Activated T-helper 2 cell treated with anti-CD3 and anti-CD28 coated beads, Interferon-gamma antibody, Interleukin-2, Interleukin-4, amounts not matched to agents 10 μg/mL and 5 μg/mL and 100 μg/mL, durations not matched to agents 14 hours and 24 hours and 36 hours (primary cell): ENCODE measurements at regions of chr20 and their contacts with region 1.

Region 1: DNA sequence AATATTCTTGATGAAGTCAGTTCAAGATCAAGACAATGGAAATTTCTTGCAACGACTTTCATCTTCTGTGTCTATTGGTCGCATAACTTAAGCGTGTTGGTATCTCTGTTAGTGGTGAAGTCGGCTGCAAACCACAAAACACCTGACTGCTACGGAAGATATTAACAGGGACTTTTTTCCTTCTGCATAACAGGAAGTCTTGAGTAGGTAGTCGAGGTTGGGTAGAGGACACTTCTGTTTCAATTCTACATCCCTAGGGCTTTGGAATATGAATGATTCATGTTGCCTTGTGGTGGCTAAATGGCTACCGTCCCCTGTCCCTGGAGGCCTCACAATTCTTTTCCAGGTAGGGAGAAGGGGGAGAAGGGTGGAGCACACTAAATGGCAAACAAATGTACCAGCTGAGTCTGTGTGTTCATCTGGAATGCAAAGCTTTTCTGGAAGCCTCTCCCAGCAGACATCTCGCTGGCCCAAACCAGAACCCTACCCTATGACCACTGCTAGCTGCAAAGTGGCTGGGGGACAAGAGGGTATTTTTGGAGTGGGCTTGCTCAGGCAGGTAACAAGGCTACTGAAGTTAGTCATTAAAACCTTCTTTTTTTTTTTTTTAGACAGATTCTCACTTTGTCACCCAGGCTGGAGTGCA is 34.6 kb upstream of the NKX2-2 start:
- DNase-seq: peak; percentile 48
- H3K4me3 Mint-ChIP-seq: peak overlapping the region; percentile 5
- H3K27ac Mint-ChIP-seq: peak overlapping the region; percentile 77
- H3K4me1 Mint-ChIP-seq: peaks cover 27% of the 10 kb centered on the region
- H3K27me3 Mint-ChIP-seq: peaks cover 2% of the 10 kb centered on the region

Region 2: DNA sequence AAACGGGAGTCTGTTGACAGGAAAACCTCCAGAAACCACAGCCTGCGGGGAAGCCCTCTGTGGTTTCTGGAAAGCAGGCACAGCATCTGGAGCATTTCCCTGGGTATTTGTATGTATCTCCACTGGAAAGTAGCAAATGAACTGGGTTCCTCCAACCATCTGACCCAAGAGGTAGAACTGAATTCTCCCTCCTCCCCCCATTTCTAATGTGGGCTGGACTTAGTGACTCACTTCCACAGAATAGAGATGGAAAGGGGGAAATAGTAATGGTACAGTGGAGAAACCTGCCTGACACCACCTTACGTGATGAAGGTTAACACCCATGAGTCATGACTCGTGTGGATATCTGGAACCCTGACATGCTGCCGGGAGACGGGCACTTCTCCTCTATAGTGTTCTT is 297.2 kb before region 1 on chr20:
- intact Hi-C with region 1: loop called (anchors 1 kb)
- DNase-seq: no peak
- H3K4me3 Mint-ChIP-seq: peak overlapping the region; percentile 42
- H3K27ac Mint-ChIP-seq: peak overlapping the region; percentile 95
- H3K4me1 Mint-ChIP-seq: peaks cover 21% of the 10 kb centered on the region
- H3K27me3 Mint-ChIP-seq: no peaks in the 10 kb centered on the region

Region 3: DNA sequence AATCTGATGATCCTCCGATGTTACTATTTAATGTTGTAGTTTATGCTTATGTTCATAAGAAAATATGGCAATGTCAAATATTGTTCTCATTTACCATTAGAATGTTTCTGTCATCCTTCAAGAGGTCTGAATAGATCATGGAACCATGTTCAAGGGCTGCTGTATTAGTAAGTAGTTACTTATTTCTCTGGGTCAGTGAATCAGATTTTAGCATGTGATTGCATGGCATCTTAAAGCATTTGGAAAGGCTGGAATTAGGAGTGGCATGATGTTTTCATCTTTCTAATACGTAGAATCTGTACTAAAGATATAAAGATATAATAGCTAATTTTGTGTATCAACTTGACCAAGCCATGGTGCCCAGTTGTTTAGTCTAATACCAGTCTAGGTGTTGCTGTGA is 110.7 kb before region 1 on chr20:
- intact Hi-C with region 1: no loop called
- DNase-seq: no peak
- H3K4me3 Mint-ChIP-seq: no peak overlapping the region
- H3K27ac Mint-ChIP-seq: no peak overlapping the region
- H3K4me1 Mint-ChIP-seq: no peaks in the 10 kb centered on the region
- H3K27me3 Mint-ChIP-seq: peaks cover 30% of the 10 kb centered on the region

Region 4: GRCh38 chr20:21559305-21559704 is 10.8 kb after region 1 on chr20:
- intact Hi-C with region 1: loop called (anchors 1 kb)
- DNase-seq: peak; percentile 15
- H3K4me3 Mint-ChIP-seq: no peak overlapping the region
- H3K27ac Mint-ChIP-seq: no peak overlapping the region
- H3K4me1 Mint-ChIP-seq: peaks cover 33% of the 10 kb centered on the region
- H3K27me3 Mint-ChIP-seq: peaks cover 9% of the 10 kb centered on the region